ENCODE measurements at regions of chr3 and their contacts with region 1.

Region 1: GRCh38 chr3:126752303-126752842 is 48.3 kb downstream of the CHCHD6 start:
- DNase-seq: peak; percentile 85
- H3K4me3 ChIP-seq: no peak overlapping the region
- H3K27ac ChIP-seq: no peak overlapping the region
- H3K4me1 ChIP-seq: peaks cover 0 to 20% (median 18%) of the 10 kb centered on the region in 4 donors
- H3K27me3 ChIP-seq: no peaks in the 10 kb centered on the region
- CTCF ChIP-seq: peak; percentile 49 to 83 (median 82)
- EP300 ChIP-seq: no peak
- POLR2A ChIP-seq: no peak

Region 2: GRCh38 chr3:126607214-126607908 is 145.0 kb before region 1 on chr3:
- intact Hi-C with region 1: no loop called
- DNase-seq: no peak
- H3K4me3 ChIP-seq: no peak overlapping the region
- H3K27ac ChIP-seq: no peak overlapping the region
- H3K4me1 ChIP-seq: no peaks in the 10 kb centered on the region
- H3K27me3 ChIP-seq: no peaks in the 10 kb centered on the region
- CTCF ChIP-seq: no peak
- EP300 ChIP-seq: no peak
- POLR2A ChIP-seq: no peak

Region 3: DNA sequence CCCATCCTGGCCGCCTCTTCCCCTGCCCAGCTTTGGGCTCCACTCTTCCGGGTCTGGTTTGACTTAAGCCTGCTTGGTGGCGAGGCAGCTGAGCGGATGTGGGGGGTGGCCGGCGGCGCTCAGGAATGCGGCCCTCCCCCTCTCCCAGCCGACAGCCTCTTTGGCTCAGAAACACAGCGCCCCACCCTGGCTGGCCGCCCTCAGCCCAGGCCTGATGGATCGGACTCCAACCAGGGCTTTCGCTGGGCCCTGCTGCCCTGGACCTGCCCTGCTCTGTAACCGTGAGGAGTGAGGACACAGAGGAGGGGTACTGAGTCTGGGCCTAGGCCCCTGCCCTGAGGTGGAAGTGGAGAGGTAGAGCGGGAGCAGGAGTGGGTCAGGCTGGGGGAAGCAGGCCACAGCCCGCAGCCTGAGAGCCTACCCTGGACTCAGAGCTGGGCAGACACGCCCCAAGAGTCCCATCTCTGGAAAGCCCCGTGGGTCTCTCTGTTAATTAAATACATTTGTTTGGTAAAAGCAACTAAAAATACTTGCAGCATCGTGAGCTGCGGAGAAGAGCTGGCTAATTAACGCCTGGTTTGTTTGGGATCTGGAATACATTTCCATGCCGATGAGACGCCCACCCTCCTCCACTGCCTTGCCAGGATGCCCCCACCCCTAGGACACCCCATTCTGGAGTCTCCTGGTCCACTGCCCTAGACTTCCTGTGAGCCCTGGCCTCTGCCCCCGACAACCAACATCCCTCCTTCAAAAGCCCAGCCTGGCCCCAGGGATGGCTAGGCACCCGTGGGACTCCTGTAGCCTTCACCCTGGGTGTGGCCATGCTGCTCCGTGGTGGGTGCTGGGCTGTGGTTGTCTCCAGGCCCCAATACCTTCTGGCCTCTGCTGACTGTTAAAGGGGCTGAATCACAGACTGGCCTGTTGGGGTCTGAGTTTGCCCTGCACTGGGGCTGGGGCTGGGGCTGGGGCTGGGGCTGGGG is 250.1 kb after region 1 on chr3:
- intact Hi-C with region 1: loop called (anchors 5 kb)
- DNase-seq: peak; percentile 93
- H3K4me3 ChIP-seq: peak overlapping the region in 3 of 4 donors; percentile 18 to 33 (median 29)
- H3K27ac ChIP-seq: peak overlapping the region; percentile 69 to 75 (median 71)
- H3K4me1 ChIP-seq: peaks cover 0 to 28% (median 16%) of the 10 kb centered on the region in 4 donors
- H3K27me3 ChIP-seq: no peaks in the 10 kb centered on the region
- CTCF ChIP-seq: peak in 3 of 4 experiments; percentile 19 to 45 (median 35)
- EP300 ChIP-seq: no peak
- POLR2A ChIP-seq: no peak

Region 4: DNA sequence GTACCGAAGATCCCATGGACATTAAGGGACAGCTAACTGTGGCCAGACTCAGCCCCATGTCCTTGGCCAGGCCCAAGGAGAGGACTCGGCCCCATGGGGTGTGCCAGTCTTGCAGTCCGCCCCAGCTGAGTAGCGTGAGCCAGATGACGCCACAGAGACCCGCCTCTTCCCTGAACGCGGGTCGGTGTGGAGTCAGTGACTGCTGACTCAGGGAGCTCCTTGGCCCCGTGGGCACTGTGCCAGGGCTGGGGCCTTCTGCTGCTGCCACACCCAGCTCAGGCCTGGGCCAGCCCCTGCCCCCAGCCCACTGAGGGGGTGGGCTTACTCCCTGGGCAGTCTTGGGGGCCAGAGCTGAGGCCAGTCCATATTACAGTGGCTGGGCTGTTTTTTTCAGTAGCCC is 283.3 kb after region 1 on chr3:
- intact Hi-C with region 1: no loop called
- DNase-seq: peak; percentile 83
- H3K4me3 ChIP-seq: no peak overlapping the region
- H3K27ac ChIP-seq: peak overlapping the region in 2 of 4 donors; percentile 17 to 32
- H3K4me1 ChIP-seq: no peaks in the 10 kb centered on the region
- H3K27me3 ChIP-seq: peaks cover 0 to 24% (median 2%) of the 10 kb centered on the region in 3 donors
- CTCF ChIP-seq: no peak
- EP300 ChIP-seq: no peak
- POLR2A ChIP-seq: no peak

Region 5: DNA sequence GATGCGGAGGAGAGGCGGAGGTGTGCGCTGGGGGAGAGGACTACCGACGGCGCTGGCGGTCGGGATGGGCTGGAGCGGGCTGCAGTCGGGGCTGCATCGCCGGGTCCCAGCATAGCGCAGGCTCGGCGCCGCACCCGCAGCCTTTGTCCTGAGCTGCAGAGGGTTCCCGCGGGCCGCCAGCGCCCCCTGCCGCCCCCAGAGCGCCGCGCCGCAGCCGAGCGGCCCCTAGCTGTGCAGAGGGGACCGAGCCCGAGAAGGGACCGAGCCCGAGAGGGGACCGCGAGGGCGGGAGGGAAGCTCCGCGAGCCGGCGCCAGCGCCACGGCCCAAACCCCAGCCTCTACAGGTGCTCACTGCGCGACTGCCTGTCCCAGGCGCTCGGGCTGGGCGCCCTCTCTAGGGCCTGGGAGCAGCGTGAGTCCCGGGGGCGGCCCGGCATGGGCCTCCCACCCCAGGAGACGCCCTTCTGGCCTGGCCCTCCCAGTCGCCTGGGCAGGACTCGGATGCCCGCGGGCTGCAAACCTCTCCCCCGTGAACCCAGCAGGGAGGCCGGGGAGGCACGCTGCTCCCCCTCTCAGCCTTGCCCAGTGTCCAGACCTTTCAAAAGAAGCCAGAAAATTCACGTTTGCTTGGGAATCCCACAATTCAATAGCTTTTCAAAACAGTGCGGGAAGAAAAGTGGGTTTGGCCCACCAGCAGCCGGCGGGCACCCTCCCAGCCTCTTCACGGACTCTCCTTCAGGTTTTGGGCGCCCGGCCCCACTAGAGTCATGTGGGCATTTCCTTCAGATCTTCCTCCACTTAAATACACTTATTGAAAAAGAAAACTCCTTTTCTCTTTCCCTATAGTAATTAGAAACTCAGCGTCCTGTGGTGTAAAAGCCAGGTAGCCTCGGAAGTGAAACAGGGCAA is 703.4 kb after region 1 on chr3:
- intact Hi-C with region 1: loop called (anchors 5 kb)
- DNase-seq: peak; percentile 72
- H3K4me3 ChIP-seq: peak overlapping the region in 2 of 4 donors; percentile 11 to 34
- H3K27ac ChIP-seq: no peak overlapping the region
- H3K4me1 ChIP-seq: peaks cover 0 to 24% (median 24%) of the 10 kb centered on the region in 4 donors
- H3K27me3 ChIP-seq: peaks cover 30 to 81% (median 49%) of the 10 kb centered on the region in 3 donors
- CTCF ChIP-seq: peak; percentile 28 to 86 (median 58)
- EP300 ChIP-seq: no peak
- POLR2A ChIP-seq: no peak

Region 6: DNA sequence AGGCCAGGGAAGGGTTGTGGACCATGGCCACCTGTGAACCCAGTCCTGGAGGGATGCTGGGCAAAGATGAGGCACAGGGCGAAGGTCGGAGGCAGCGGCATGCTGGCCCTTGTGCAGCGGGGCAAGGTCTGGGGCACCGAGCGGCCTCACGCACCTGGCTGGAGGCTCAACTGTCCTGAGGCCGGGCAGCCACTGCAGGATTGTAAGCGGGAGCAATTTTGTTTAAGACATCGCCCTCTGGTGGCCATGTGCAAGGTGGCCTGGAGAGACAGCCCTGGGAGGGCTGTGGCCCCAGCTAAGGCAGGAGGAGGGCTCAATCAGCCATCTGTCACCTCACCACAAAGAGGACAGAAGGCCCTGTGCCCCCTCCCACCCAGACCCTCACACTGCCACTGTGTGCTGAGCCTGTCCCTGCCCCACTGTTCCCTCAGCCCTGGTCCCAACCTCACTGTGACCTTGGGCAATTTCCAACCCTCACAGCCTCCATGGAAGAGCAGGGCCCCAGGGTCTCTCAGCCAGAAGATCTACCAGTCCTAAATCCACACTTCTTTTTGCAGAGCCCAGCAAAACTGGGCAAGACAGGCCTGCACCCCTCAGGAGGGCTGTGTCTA is 791.9 kb after region 1 on chr3:
- intact Hi-C with region 1: loop called (anchors 5 kb)
- DNase-seq: peak; percentile 76
- H3K4me3 ChIP-seq: no peak overlapping the region
- H3K27ac ChIP-seq: no peak overlapping the region
- H3K4me1 ChIP-seq: peaks cover 0 to 17% (median 10%) of the 10 kb centered on the region in 4 donors
- H3K27me3 ChIP-seq: no peaks in the 10 kb centered on the region
- CTCF ChIP-seq: peak; percentile 17 to 81 (median 52)
- EP300 ChIP-seq: no peak
- POLR2A ChIP-seq: no peak

Measured in sigmoid colon (tissue), 7 donors.